ENCODE measurements at regions of chr22 and their contacts with region 1.

Region 1: GRCh38 chr22:36528795-36529751 is at the start of gene EIF3D:
- DNase-seq: peak; percentile 99
- H3K4me3 Mint-ChIP-seq: peak within 1 kb of the TSS; percentile 96
- H3K27ac Mint-ChIP-seq: peak within 1 kb of the TSS; percentile 99
- H3K4me1 Mint-ChIP-seq: peaks cover 31% of the 10 kb centered on the region
- H3K27me3 Mint-ChIP-seq: no peaks in the 10 kb centered on the region
- total RNA-seq, gene EIF3D: 334 to 341 TPM

Region 2: GRCh38 chr22:35660291-35661127 is 868.6 kb before region 1 on chr22:
- CTCF ChIA-PET with region 1: no interaction called
- intact Hi-C with region 1: no loop called
- DNase-seq: peak; percentile 78
- H3K4me3 Mint-ChIP-seq: peak overlapping the region; percentile 32
- H3K27ac Mint-ChIP-seq: peak overlapping the region; percentile 94
- H3K4me1 Mint-ChIP-seq: peaks cover 70% of the 10 kb centered on the region
- H3K27me3 Mint-ChIP-seq: no peaks in the 10 kb centered on the region

Region 3: GRCh38 chr22:36454916-36455570 is 74.0 kb before region 1 on chr22:
- CTCF ChIA-PET with region 1: no interaction called
- intact Hi-C with region 1: loop called (anchors 1 kb)
- DNase-seq: peak; percentile 96
- H3K4me3 Mint-ChIP-seq: peak overlapping the region; percentile 76
- H3K27ac Mint-ChIP-seq: peak overlapping the region; percentile 75
- H3K4me1 Mint-ChIP-seq: peaks cover 37% of the 10 kb centered on the region
- H3K27me3 Mint-ChIP-seq: no peaks in the 10 kb centered on the region

Region 4: GRCh38 chr22:36470162-36470993 is 58.7 kb before region 1 on chr22:
- CTCF ChIA-PET with region 1: no interaction called
- intact Hi-C with region 1: no loop called
- DNase-seq: peak; percentile 90
- H3K4me3 Mint-ChIP-seq: no peak overlapping the region
- H3K27ac Mint-ChIP-seq: peak overlapping the region; percentile 46
- H3K4me1 Mint-ChIP-seq: peaks cover 30% of the 10 kb centered on the region
- H3K27me3 Mint-ChIP-seq: no peaks in the 10 kb centered on the region

Region 5: DNA sequence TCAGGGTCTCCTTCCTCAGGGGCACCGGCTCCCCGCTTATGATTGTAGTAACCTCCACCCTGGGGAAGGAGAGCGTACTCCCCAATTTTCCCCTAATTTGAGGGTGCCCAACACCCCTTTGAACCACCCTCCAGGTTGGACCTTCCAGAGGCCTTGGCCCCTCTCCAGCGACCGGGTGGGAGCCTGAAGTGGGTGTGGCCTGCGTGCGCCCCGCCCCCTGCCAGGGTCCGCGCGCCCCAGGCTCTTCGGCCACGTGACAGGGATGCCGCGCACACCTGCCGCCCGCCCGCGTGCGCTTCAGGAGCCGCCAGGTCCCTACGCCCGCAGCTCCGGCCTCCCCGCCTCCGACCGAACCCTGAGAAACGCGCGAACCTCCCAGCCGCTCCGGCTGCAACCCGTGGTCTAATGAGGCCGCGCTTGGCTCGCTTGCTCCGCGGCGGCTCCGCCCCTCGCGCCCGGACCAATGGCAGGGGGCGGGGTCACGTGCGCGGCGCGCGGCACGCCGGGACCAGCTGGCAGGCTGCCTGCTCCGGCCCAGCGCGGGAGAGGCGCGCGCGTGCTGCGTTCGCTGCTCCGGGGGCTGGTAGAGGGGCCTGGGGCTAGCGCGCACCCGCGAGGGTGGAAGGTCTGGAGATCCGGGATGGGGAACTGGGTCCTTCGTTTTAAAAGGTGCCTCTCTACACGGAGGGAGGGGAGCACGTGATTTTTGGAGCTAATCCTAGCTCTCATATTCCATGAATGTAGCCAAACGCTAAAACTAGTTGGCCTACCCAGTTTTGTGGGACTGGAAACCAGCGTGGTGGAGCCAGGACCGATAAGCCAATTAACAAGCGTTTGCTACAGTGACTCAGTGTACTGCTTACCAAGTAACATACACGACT is 22.2 kb before region 1 on chr22 and contains the start of gene FOXRED2:
- CTCF ChIA-PET with region 1: interaction called, 8 read pairs
- intact Hi-C with region 1: loop called (anchors 1 kb)
- DNase-seq: peak; percentile 89
- H3K4me3 Mint-ChIP-seq: peak within 1 kb of the TSS; percentile 72
- H3K27ac Mint-ChIP-seq: peak within 1 kb of the TSS; percentile 50
- H3K4me1 Mint-ChIP-seq: peaks cover 25% of the 10 kb centered on the region
- H3K27me3 Mint-ChIP-seq: no peaks in the 10 kb centered on the region
- total RNA-seq, gene FOXRED2: 10.6 to 11.9 TPM

Region 6: GRCh38 chr22:36587289-36588154 is 58.4 kb after region 1 on chr22:
- CTCF ChIA-PET with region 1: no interaction called
- intact Hi-C with region 1: no loop called
- DNase-seq: no peak
- H3K4me3 Mint-ChIP-seq: no peak overlapping the region
- H3K27ac Mint-ChIP-seq: no peak overlapping the region
- H3K4me1 Mint-ChIP-seq: no peaks in the 10 kb centered on the region
- H3K27me3 Mint-ChIP-seq: peaks cover 14% of the 10 kb centered on the region

Region 7: DNA sequence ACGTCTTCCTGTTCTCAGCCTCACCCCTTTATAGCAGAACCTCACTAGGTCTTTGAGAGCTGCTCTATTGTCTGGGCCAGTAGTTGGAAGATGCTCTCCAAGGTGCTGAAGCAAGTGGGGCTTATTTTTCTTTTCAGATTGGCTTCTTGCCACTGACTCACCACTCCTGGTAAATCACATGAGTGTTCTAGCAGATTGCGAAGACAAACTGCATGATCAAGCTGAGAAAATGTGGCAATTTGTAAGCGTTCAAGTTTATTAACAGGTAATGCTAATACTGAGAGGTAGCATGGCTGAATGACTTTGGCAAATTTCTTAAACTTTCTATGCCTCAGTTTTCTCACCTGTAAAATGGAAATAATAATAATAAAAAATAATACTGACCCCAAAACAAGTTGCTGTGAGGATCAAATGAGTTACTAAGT is 115.3 kb after region 1 on chr22:
- CTCF ChIA-PET with region 1: no interaction called
- intact Hi-C with region 1: no loop called
- DNase-seq: peak; percentile 57
- H3K4me3 Mint-ChIP-seq: no peak overlapping the region
- H3K27ac Mint-ChIP-seq: no peak overlapping the region
- H3K4me1 Mint-ChIP-seq: no peaks in the 10 kb centered on the region
- H3K27me3 Mint-ChIP-seq: peaks cover 45% of the 10 kb centered on the region

Region 8: DNA sequence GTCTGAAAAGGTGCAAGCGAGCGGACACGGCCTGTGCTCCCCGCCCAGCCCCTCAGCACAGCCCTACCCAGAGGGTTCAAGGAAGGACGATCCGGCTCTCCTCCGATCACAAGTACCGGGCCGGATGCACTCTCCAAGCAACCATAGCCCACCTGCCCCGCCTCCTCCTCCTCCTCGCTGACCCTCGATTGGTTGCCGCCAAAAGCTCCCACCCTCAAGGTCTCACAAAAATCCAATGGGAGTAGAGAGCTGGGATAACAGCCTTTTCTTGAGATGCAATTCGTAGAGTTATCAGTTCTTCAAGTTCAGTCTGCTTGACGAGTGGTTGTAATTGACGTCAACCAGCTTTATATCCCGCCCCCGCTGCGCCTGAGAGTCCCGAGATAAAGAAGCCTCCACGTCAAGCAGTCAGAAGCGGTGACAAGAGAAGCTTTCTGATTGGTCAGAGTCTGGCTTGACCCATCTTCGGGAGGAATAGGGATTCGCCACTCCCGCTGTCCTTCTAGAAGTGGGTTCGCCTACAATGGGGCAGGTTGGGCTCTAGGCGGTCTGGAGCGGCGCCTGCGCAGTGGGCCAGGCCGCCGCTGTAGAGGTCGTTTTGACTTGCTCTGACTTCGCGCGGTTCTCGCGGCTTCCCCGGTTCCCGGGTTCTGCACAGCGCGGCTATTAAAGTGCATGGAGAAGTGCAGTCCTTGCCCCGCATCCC is 247.0 kb after region 1 on chr22 and contains the start of gene IFT27:
- CTCF ChIA-PET with region 1: interaction called, 3 read pairs
- intact Hi-C with region 1: loop called (anchors 1 kb)
- DNase-seq: peak; percentile 99
- H3K4me3 Mint-ChIP-seq: peak within 1 kb of the TSS; percentile 91
- H3K27ac Mint-ChIP-seq: peak within 1 kb of the TSS; percentile 90
- H3K4me1 Mint-ChIP-seq: peaks cover 27% of the 10 kb centered on the region
- H3K27me3 Mint-ChIP-seq: no peaks in the 10 kb centered on the region
- total RNA-seq, gene IFT27: 15.7 to 16.2 TPM

Region 9: DNA sequence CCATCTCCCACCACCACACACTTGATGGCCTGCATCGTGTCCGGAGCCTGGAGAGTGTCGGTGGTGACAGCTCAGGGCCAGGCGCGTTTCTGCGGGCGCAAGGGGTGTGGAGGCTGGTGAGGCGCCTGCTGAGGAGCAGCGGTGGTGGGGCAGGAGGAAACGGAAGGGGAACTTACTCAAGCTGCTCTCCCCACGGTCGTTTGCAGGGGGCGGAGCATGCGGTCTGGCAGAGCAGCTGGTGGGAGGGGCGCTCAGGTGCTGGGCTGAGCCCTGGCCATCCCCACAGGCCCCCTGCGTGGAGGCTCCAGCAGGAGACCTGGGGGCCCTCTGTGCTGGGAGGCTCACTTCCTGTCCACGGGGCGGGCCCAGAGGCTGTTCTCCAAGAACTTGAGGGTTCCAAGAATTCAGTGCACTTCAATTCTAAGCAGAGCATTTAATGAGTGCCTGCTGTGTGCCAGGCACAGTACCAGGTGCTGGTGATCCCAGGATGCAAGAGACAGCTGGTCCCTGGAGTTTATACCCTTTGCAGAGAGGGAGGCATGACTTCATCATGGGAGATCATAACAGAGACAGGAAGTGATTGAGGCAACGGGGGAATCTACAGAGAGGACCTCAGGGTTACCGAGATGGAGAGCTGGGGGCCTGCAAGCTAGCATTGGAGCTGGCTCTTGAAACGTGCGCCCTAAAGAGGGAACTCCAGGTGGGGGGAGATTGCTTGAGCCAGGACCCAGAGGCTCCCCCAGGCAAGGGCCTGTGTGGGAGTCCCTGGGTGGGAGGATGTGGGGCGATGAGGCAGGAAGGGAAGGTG is 715.2 kb after region 1 on chr22 and contains the start of gene RAC2:
- CTCF ChIA-PET with region 1: no interaction called
- intact Hi-C with region 1: loop called (anchors 2 kb)
- DNase-seq: peak; percentile 94
- H3K4me3 Mint-ChIP-seq: peak within 1 kb of the TSS; percentile 99
- H3K27ac Mint-ChIP-seq: peak within 1 kb of the TSS; percentile 99
- H3K4me1 Mint-ChIP-seq: peaks cover 38% of the 10 kb centered on the region
- H3K27me3 Mint-ChIP-seq: no peaks in the 10 kb centered on the region
- total RNA-seq, gene RAC2: 728 to 759 TPM